Naive thymus-derived CD4-positive, alpha-beta T cell (primary cell): ENCODE measurements at regions of chr4 and their contacts with region 1.

Region 1: GRCh38 chr4:26410385-26411293 is 79.6 kb downstream of the CCKAR start:
- DNase-seq: peak in 6 of 9 donors; percentile 28 to 60 (median 53)
- ATAC-seq: peak; percentile 57
- H3K4me3 ChIP-seq: no peak overlapping the region
- H3K4me3 Mint-ChIP-seq: no peak overlapping the region
- H3K27ac ChIP-seq: no peak overlapping the region
- H3K27ac Mint-ChIP-seq: peak overlapping the region in 1 of 9 donors; percentile 49
- H3K4me1 ChIP-seq: no peaks in the 10 kb centered on the region
- H3K4me1 Mint-ChIP-seq: peaks cover 0 to 5% (median 0%) of the 10 kb centered on the region in 7 donors
- H3K27me3 ChIP-seq: no peaks in the 10 kb centered on the region
- H3K27me3 Mint-ChIP-seq: no peaks in the 10 kb centered on the region

Region 2: DNA sequence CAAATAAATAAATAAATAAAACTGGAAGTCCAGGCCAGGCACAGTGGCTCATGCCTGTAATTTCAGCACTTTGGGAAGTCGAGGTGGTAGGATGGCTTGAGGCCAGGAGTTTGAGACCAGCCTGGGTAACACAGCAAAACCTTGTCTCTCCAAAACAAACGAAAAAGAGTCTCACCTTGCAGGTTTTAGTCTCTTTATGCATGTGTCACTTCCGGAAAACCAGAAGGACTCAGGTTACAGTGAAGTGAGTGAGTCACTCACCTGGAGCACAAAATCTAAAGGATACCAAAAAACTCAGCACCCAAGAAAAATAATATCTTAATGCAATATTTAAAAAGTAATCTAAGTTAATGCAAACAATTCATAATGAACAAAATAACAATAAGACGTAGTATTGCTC is 775.1 kb before region 1 on chr4:
- CTCF ChIA-PET with region 1: no interaction called
- POLR2A ChIA-PET with region 1: no interaction called
- intact Hi-C with region 1: no loop called
- DNase-seq: no peak
- ATAC-seq: no peak
- H3K4me3 ChIP-seq: no peak overlapping the region
- H3K4me3 Mint-ChIP-seq: no peak overlapping the region
- H3K27ac ChIP-seq: no peak overlapping the region
- H3K27ac Mint-ChIP-seq: no peak overlapping the region
- H3K4me1 ChIP-seq: no peaks in the 10 kb centered on the region
- H3K4me1 Mint-ChIP-seq: no peaks in the 10 kb centered on the region
- H3K27me3 ChIP-seq: no peaks in the 10 kb centered on the region
- H3K27me3 Mint-ChIP-seq: peaks cover 3 to 15% (median 10%) of the 10 kb centered on the region in 5 donors

Region 3: DNA sequence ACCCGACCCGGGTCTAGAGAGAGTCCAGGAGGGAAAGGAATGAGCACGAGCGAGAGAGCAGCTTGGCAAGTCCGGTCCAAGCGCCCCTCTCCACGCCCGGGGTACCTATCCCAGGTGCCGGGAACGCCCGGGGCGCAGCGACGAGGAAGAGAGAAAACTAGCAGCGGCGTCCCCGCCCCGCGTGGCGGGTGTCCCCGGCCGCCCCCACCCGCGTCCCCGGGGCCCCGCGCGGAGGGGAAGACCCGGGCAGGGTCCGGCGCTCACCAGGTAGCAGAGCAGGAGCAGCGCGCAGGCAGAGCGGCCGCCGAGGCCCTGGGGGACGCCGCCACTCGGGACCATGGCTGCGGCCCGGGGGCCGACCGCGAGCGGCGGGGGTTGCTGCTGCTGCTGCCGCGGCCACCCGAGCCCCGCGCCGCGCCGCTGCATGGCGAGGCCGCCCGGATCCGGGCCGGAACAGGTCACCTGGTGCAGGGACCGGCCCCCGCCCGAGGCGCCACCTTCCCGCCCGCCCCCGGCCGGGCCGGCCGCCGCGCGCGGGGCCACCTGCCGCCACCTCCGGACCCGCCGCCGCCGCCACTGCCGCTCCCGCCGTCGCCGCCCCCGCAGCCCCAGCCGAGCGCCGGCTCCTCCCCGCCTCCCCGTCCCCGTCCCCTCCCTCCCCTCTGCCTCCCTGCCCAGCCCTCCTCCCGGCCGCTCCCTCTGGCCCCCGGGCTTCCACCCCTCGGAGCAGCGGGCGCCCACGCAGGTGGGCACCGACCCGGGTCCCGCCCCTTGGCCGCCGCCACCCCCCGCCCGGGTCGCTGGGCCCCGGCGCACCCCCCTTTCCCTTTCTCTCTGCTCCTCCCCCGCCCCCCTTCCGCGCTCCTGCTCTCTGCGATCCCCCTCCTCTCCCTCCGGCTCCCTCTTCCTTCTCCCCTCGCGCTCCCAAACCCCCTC is 548.0 kb before region 1 on chr4 and contains the start of gene SEL1L3:
- CTCF ChIA-PET with region 1: no interaction called
- POLR2A ChIA-PET with region 1: no interaction called
- intact Hi-C with region 1: loop called in 1 of 2 experiments (anchors 5 kb)
- DNase-seq: peak in 8 of 9 donors; percentile 13 to 77 (median 29)
- ATAC-seq: peak; percentile 59
- H3K4me3 ChIP-seq: peak within 1 kb of the TSS; percentile 68
- H3K4me3 Mint-ChIP-seq: peak within 1 kb of the TSS; percentile 94 to 100 (median 98)
- H3K27ac ChIP-seq: peak within 1 kb of the TSS; percentile 71
- H3K27ac Mint-ChIP-seq: peak within 1 kb of the TSS; percentile 88 to 99 (median 96)
- H3K4me1 ChIP-seq: peaks cover 30 to 32% of the 10 kb centered on the region in 2 donors
- H3K4me1 Mint-ChIP-seq: peaks cover 32 to 44% (median 39%) of the 10 kb centered on the region in 7 donors
- H3K27me3 ChIP-seq: no peaks in the 10 kb centered on the region
- H3K27me3 Mint-ChIP-seq: peaks cover 0 to 3% (median 0%) of the 10 kb centered on the region in 5 donors
- total RNA-seq, gene SEL1L3: 38.1 to 55.8 (median 47.0) TPM

Region 4: DNA sequence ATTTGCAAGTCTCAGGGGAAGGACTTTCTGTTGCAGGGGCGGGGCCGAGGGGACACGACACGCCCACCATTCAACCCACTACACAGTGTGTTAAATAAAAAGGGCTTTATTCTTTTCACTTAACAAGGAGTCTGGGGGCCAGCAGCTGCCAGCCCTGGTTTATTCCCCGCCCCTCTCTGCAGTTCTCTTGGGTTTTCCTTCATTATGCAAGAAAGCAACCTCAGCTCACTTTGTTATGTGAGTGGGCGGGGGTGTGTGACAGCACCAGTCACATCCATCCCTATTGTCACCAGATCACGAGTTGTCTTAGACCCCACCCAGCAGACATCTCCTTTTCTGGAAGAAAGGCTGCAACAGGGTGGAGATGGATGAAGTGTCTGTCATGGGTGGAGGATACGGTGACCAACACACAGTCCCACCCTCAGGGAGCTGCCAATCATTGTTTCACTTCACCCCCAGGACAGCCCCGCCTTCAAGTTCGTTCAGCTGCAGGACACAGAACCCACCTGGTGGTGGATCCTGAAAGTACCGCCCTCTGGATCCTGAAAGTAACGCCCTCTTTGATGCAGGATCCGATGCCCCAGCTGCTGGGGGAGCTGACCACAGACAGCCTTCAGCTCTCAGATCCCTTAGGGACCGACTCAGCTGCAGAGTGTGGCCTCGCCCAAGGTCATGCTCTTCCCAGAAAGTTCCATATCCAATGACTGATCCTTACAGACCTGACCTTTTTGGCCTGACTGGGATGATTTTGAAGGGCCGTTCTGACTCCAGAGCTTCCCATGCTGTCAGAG is 417.0 kb before region 1 on chr4:
- CTCF ChIA-PET with region 1: interaction called, 19 read pairs
- POLR2A ChIA-PET with region 1: no interaction called
- intact Hi-C with region 1: loop called (anchors 1 kb)
- DNase-seq: peak in 1 of 9 donors; percentile 8
- ATAC-seq: peak; percentile 41
- H3K4me3 ChIP-seq: no peak overlapping the region
- H3K4me3 Mint-ChIP-seq: no peak overlapping the region
- H3K27ac ChIP-seq: no peak overlapping the region
- H3K27ac Mint-ChIP-seq: peak overlapping the region in 2 of 9 donors; percentile 48 to 62
- H3K4me1 ChIP-seq: no peaks in the 10 kb centered on the region
- H3K4me1 Mint-ChIP-seq: peaks cover 0 to 11% (median 0%) of the 10 kb centered on the region in 7 donors
- H3K27me3 ChIP-seq: no peaks in the 10 kb centered on the region
- H3K27me3 Mint-ChIP-seq: no peaks in the 10 kb centered on the region

Region 5: GRCh38 chr4:26061248-26061986 is 349.2 kb before region 1 on chr4:
- CTCF ChIA-PET with region 1: no interaction called
- POLR2A ChIA-PET with region 1: no interaction called
- intact Hi-C with region 1: loop called (anchors 1 kb)
- DNase-seq: no peak
- ATAC-seq: peak; percentile 81
- H3K4me3 ChIP-seq: no peak overlapping the region
- H3K4me3 Mint-ChIP-seq: no peak overlapping the region
- H3K27ac ChIP-seq: no peak overlapping the region
- H3K27ac Mint-ChIP-seq: peak overlapping the region in 1 of 9 donors; percentile 29
- H3K4me1 ChIP-seq: no peaks in the 10 kb centered on the region
- H3K4me1 Mint-ChIP-seq: peaks cover 0 to 15% (median 0%) of the 10 kb centered on the region in 7 donors
- H3K27me3 ChIP-seq: no peaks in the 10 kb centered on the region
- H3K27me3 Mint-ChIP-seq: peaks cover 3 to 10% (median 5%) of the 10 kb centered on the region in 5 donors

Region 6: DNA sequence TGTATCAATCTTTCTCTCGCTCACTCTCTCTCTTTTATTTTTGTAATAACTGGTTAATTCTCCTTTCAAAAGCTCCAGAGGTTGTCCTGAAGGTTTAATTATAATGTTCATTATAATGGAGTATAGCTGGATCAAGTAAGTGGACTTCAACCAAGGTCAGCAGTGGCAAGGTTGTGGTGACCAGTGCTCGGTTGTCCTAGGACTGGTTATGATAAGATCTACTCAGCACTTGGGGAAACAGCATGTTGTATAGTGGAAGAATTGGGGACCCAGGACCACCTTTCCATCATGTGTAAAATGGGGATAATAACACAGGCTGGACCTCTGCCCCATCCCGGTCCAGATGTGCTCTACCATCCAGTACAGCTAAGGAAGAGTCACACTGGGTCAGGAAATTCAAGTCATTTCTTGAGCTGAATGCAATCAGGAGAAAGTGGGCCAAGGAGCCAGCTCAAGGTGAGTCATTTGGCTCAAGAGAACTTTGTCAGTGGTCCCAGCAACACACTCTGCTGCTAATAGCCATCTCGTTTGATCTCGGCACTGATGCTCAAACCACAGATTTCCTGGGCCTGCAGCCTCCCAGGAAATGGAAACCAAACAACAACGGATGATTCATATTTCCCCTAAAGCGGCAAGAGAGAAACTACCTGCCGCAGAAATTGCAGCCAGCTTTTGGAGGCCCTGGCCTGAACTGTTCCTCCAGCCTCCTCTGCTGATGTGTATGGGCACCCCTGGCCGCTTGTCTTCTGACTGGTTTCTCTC is 213.4 kb before region 1 on chr4:
- CTCF ChIA-PET with region 1: no interaction called
- POLR2A ChIA-PET with region 1: no interaction called
- intact Hi-C with region 1: loop called in 1 of 2 experiments (anchors 5 kb)
- DNase-seq: peak in 5 of 9 donors; percentile 1 to 74 (median 6)
- ATAC-seq: peak; percentile 78
- H3K4me3 ChIP-seq: peak overlapping the region; percentile 31
- H3K4me3 Mint-ChIP-seq: peak overlapping the region in 9 of 10 donors; percentile 21 to 82 (median 63)
- H3K27ac ChIP-seq: peak overlapping the region; percentile 38
- H3K27ac Mint-ChIP-seq: peak overlapping the region in 8 of 9 donors; percentile 42 to 95 (median 80)
- H3K4me1 ChIP-seq: peaks cover 17 to 37% of the 10 kb centered on the region in 2 donors
- H3K4me1 Mint-ChIP-seq: peaks cover 18 to 80% (median 30%) of the 10 kb centered on the region in 7 donors
- H3K27me3 ChIP-seq: no peaks in the 10 kb centered on the region
- H3K27me3 Mint-ChIP-seq: no peaks in the 10 kb centered on the region

Region 7: GRCh38 chr4:26330186-26330787 is 80.4 kb before region 1 on chr4:
- CTCF ChIA-PET with region 1: interaction called, 12 read pairs
- POLR2A ChIA-PET with region 1: no interaction called
- intact Hi-C with region 1: loop called (anchors 1 kb)
- DNase-seq: peak in 7 of 9 donors; percentile 19 to 50 (median 46)
- ATAC-seq: peak; percentile 86
- H3K4me3 ChIP-seq: no peak overlapping the region
- H3K4me3 Mint-ChIP-seq: peak overlapping the region in 4 of 10 donors; percentile 11 to 44 (median 32)
- H3K27ac ChIP-seq: no peak overlapping the region
- H3K27ac Mint-ChIP-seq: peak overlapping the region in 2 of 9 donors; percentile 3 to 60
- H3K4me1 ChIP-seq: no peaks in the 10 kb centered on the region
- H3K4me1 Mint-ChIP-seq: peaks cover 30 to 60% (median 52%) of the 10 kb centered on the region in 7 donors
- H3K27me3 ChIP-seq: no peaks in the 10 kb centered on the region
- H3K27me3 Mint-ChIP-seq: no peaks in the 10 kb centered on the region

Region 8: DNA sequence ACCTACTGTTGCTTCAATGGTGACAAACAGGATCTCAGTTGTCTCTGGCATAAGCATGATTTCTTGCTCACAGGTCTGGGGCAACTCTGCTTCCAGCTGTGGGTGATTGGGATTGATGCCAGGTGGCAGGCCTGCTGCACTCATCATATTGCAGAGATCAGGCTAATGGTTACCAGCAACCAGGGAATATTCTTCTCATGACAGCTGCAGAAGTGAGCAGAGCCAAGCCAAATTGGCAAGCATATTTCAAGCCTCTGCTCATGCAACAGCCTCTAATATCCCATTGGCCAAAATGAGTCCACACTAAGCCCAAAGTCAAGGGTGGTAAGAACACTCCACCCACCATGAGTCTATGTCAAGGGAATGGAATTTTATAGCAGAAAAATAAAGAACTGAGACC is 146.5 kb after region 1 on chr4:
- CTCF ChIA-PET with region 1: no interaction called
- POLR2A ChIA-PET with region 1: no interaction called
- intact Hi-C with region 1: no loop called
- DNase-seq: no peak
- ATAC-seq: no peak
- H3K4me3 ChIP-seq: no peak overlapping the region
- H3K4me3 Mint-ChIP-seq: no peak overlapping the region
- H3K27ac ChIP-seq: no peak overlapping the region
- H3K27ac Mint-ChIP-seq: no peak overlapping the region
- H3K4me1 ChIP-seq: no peaks in the 10 kb centered on the region
- H3K4me1 Mint-ChIP-seq: no peaks in the 10 kb centered on the region
- H3K27me3 ChIP-seq: no peaks in the 10 kb centered on the region
- H3K27me3 Mint-ChIP-seq: peaks cover 7 to 44% (median 37%) of the 10 kb centered on the region in 5 donors